Activated naive CD4-positive, alpha-beta T cell treated with anti-CD3 and anti-CD28 coated beads for 36 hours (primary cell): ENCODE measurements at regions of chr7 and their contacts with region 1.

Region 1: DNA sequence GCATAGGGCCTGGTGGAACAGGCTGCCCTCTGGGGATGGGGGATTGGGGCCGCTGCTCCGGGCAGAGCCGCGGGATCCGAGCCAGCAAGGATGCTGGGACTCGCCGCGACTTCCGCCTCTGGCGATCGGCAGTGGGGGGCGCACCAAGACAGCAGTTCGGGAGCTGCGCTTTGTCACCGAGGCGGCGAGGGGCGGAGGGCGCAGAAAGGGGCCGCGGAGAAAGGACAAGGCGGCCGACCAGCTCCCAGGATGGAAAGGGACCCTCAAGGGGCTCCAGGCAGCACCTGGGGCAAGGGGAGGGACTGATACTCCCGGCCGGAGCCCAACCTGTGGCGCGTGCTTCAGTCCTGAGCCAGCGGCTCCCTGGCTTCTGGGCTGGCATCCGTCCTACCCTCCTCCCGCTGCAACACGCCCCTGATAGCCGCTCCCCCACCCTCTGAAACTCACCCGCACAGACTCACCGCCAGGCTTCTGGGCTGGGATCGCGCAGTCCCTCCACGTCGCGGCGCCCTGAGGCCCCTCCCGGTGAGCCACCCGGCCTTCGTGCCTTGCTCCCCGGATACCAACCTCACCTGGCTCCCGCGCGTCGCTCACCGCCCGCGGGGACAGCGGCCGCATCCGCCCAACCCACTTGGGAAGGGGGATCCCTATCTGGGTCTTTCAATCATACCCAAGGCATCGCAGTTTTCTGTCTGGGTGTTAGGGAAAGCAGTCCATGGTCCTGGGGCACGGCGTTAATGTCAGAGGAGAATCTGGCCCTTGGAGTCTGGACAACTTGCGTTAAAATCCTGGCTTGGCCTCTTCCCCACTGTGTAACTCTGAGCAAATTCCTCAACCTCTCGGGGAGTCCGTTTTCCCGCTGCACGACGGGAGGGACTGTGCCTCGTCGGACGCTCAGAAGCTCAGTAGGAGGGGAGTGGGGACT is 7.0 kb upstream of the EVX1 start:
- DNase-seq: peak; percentile 52
- H3K4me3 Mint-ChIP-seq: peak overlapping the region; percentile 29
- H3K27ac Mint-ChIP-seq: no peak overlapping the region
- H3K4me1 Mint-ChIP-seq: peaks cover 17% of the 10 kb centered on the region
- H3K27me3 Mint-ChIP-seq: peaks cover 57% of the 10 kb centered on the region

Region 2: DNA sequence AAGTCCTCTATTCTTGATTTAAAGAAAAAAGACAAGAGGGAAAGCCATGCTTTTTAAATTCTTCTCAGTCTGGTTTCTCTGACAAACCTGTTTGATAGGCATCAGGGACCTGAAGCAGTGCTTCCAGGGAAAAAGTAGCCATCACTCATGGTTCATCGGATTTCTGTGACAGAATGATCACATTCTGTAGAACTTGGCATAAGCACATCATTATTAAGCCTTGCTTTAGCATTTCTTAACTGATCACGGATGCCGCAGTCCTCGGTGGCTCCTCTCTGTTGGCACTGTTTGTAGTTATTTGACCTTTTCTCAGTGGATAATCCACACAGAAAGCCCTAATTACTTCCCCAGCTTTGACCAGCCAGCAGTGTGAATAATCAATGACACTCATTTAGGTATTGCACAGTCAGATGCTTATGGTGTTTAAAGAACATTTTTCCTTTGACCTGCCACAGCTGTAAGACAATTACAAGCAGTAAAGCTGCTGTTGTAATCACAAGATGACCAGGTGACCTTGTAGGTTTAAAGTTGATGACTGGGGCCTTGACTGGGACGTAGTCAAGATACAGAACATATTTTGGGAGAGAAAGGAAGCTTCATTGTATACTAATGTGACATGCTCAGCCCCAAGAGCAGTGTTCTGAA is 306.8 kb before region 1 on chr7:
- CTCF ChIA-PET with region 1: no interaction called
- intact Hi-C with region 1: no loop called
- DNase-seq: no peak
- H3K4me3 Mint-ChIP-seq: no peak overlapping the region
- H3K27ac Mint-ChIP-seq: no peak overlapping the region
- H3K4me1 Mint-ChIP-seq: no peaks in the 10 kb centered on the region
- H3K27me3 Mint-ChIP-seq: peaks cover 20% of the 10 kb centered on the region

Region 3: DNA sequence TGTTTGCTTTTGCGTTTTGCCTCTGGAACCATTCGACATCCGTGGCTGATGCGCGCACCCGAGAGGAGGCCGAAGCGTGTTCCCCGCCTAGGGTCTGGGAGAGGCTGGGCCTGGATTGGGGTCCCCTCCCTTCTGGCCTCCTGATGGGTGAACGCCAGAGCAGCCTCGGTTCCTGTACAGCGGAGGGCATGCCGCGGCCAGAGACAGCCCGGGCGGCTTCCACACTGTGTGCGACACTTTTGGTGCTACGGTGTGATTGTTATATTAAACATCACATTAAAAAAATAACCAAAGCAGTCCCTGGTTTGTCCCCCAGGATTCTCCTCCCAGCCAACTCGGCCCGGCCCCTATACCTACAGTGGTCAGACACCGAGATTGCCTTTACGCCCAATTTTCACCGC is 75.5 kb before region 1 on chr7:
- CTCF ChIA-PET with region 1: no interaction called
- intact Hi-C with region 1: no loop called
- DNase-seq: no peak
- H3K4me3 Mint-ChIP-seq: peak overlapping the region; percentile 57
- H3K27ac Mint-ChIP-seq: no peak overlapping the region
- H3K4me1 Mint-ChIP-seq: peaks cover 38% of the 10 kb centered on the region
- H3K27me3 Mint-ChIP-seq: peaks cover 79% of the 10 kb centered on the region

Region 4: DNA sequence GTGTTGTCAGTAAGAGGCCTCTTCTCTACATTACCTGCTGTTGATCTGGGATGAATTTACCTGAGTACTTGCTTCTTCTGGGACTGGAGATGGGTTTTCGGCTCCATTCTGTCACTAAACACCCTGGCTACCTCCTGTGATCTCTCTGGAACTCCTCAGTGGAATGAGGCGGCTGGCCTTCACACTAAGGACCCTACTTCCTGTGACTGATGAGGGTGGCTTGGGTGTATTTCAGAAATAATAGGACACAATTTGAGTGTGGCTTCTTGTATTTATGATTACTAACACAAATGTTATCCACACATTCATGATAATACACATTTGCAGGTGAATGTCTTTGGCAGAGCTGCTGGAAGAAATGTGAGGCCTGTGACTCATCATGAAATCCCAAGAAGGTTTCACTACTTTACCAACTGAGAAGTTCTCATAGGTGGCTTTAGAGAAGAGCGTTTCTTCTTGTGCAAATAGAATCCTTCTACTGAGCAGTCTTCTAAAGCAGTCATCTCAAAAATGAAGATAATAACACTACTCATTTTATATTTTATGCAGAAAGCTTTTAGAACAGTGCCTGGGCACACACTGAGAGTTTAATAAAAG is 14.3 kb before region 1 on chr7:
- CTCF ChIA-PET with region 1: no interaction called
- intact Hi-C with region 1: loop called (anchors 2 kb)
- DNase-seq: no peak
- H3K4me3 Mint-ChIP-seq: no peak overlapping the region
- H3K27ac Mint-ChIP-seq: no peak overlapping the region
- H3K4me1 Mint-ChIP-seq: peaks cover 14% of the 10 kb centered on the region
- H3K27me3 Mint-ChIP-seq: peaks cover 64% of the 10 kb centered on the region

Region 5: GRCh38 chr7:27245798-27246691 is 10.4 kb after region 1 on chr7:
- CTCF ChIA-PET with region 1: no interaction called
- intact Hi-C with region 1: no loop called
- DNase-seq: no peak
- H3K4me3 Mint-ChIP-seq: no peak overlapping the region
- H3K27ac Mint-ChIP-seq: no peak overlapping the region
- H3K4me1 Mint-ChIP-seq: peaks cover 24% of the 10 kb centered on the region
- H3K27me3 Mint-ChIP-seq: peaks cover 80% of the 10 kb centered on the region

Region 6: GRCh38 chr7:27576360-27576944 is 340.8 kb after region 1 on chr7:
- CTCF ChIA-PET with region 1: interaction called, 5 read pairs
- intact Hi-C with region 1: loop called (anchors 1 kb)
- DNase-seq: no peak
- H3K4me3 Mint-ChIP-seq: no peak overlapping the region
- H3K27ac Mint-ChIP-seq: no peak overlapping the region
- H3K4me1 Mint-ChIP-seq: no peaks in the 10 kb centered on the region
- H3K27me3 Mint-ChIP-seq: no peaks in the 10 kb centered on the region